ENCODE measurements at regions of chr7 and their contacts with region 1.

Region 1: GRCh38 chr7:55572378-55573233 is at the start of gene VOPP1:
- DNase-seq: peak; percentile 53
- H3K4me3 Mint-ChIP-seq: peak within 1 kb of the TSS; percentile 91
- H3K27ac Mint-ChIP-seq: peak within 1 kb of the TSS; percentile 97
- H3K4me1 Mint-ChIP-seq: peaks cover 63% of the 10 kb centered on the region
- H3K27me3 Mint-ChIP-seq: no peaks in the 10 kb centered on the region
- total RNA-seq, gene VOPP1: 100 to 102 TPM

Region 2: DNA sequence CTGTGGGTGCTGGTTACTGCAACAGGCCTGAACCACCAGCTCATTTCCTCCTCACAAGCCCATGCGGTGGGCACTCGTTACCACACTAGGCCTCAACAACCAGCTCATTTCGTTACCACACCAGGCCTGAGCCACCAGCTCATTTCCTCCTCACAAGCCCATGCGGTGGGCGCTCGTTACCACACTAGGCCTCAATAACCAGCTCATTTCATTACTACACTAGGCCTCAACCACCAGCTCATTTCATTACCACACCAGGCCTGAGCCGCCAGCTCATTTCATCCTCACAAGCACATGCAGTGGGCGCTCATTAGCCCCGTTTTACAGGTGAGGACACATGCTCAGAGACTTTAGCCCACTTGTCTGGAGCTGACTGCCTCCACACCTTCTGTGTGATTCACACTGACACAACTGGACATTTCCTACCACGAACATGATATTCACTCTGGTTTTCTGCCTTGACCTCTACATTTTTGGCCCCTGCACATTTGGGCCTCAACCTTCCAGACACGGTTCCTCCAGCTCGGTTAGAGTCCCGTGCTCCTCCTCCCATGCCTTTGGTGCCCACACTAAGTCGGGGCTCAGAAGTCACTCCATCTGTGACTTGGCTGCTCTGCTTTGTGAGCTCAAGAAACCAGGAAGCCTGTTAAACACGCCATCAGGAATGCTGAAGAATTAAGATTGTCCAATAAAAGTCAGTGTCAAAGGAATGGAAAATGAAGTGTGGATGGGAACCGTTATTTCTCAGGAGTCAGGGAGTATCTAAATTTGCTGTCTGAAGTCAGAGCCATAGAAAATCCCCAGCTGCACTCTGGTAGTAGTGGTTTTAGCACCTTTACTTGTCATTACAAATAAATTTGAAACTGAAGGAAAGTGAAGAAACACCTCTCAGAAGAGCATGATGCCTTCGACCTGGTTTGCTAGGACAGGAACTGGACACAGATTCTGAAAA is 263.3 kb before region 1 on chr7:
- CTCF ChIA-PET with region 1: no interaction called
- intact Hi-C with region 1: loop called (anchors 1 kb)
- DNase-seq: peak; percentile 70
- H3K4me3 Mint-ChIP-seq: no peak overlapping the region
- H3K27ac Mint-ChIP-seq: no peak overlapping the region
- H3K4me1 Mint-ChIP-seq: peaks cover 10% of the 10 kb centered on the region
- H3K27me3 Mint-ChIP-seq: no peaks in the 10 kb centered on the region

Region 3: GRCh38 chr7:55400191-55400590 is 172.4 kb before region 1 on chr7:
- CTCF ChIA-PET with region 1: no interaction called
- intact Hi-C with region 1: no loop called
- DNase-seq: no peak
- H3K4me3 Mint-ChIP-seq: no peak overlapping the region
- H3K27ac Mint-ChIP-seq: no peak overlapping the region
- H3K4me1 Mint-ChIP-seq: no peaks in the 10 kb centered on the region
- H3K27me3 Mint-ChIP-seq: no peaks in the 10 kb centered on the region

Region 4: DNA sequence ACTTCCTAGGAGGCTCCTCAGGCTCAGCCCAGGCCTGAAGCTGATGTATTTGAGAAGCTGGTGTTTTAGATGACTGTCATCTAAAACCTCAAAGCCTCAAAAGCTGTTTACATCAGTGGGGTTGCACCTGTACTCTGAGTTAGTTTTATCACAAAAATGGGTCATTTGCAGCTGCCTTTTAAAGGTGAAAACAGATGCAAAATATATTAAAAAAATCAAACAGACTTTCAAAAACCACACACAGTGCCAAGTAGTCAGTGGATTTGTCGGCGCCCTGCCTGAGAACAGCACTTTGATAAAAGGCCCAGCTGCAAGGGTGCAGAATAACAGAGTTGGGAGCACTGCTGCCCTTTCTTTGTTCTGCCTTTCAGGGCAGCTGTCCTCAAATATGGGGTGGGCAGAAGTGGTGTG is 103.3 kb before region 1 on chr7:
- CTCF ChIA-PET with region 1: no interaction called
- intact Hi-C with region 1: loop called (anchors 2 kb)
- DNase-seq: peak; percentile 53
- H3K4me3 Mint-ChIP-seq: no peak overlapping the region
- H3K27ac Mint-ChIP-seq: peak overlapping the region; percentile 83
- H3K4me1 Mint-ChIP-seq: peaks cover 72% of the 10 kb centered on the region
- H3K27me3 Mint-ChIP-seq: no peaks in the 10 kb centered on the region

Region 5: DNA sequence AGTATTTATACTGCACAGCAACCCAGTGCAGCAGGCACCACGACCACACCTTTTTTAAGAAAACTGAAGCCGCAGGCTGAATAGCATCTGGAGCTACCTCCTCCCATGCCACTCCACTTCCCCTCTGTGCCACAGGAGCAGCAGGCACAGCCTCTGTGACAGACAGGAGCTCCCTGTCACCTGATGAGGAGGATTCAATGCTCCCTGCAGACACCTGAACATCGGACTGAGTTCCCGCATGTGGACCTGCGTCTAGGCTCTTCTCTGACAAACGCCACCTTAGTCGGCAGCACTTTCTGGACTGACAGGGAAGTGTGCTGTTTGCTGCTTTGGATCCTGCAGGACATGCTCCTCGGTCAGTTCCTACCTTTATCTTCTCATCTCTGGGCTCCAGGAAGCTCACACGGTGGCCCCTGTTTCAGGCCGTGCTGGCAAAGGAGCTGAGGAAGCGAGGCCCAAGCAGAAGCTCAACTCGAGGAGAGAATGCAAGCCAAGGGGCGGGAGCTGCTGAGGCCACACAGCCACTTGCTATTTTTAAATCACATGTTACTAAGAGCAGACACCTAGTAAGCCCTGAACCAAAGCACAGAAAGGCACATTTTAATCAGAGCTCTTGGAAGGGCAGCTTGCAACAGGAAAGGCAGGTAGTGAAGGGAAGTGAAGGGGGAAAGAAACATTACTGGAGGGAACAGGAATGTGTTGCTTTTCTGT is 56.9 kb before region 1 on chr7:
- CTCF ChIA-PET with region 1: interaction called, 4 read pairs
- intact Hi-C with region 1: loop called (anchors 1 kb)
- DNase-seq: peak; percentile 56
- H3K4me3 Mint-ChIP-seq: peak overlapping the region; percentile 36
- H3K27ac Mint-ChIP-seq: peak overlapping the region; percentile 90
- H3K4me1 Mint-ChIP-seq: peaks cover 77% of the 10 kb centered on the region
- H3K27me3 Mint-ChIP-seq: no peaks in the 10 kb centered on the region

Region 6: GRCh38 chr7:55593515-55594318 is 21.1 kb after region 1 on chr7:
- CTCF ChIA-PET with region 1: interaction called, 6 read pairs
- intact Hi-C with region 1: loop called (anchors 1 kb)
- DNase-seq: peak; percentile 87
- H3K4me3 Mint-ChIP-seq: no peak overlapping the region
- H3K27ac Mint-ChIP-seq: no peak overlapping the region
- H3K4me1 Mint-ChIP-seq: peaks cover 17% of the 10 kb centered on the region
- H3K27me3 Mint-ChIP-seq: peaks cover 2% of the 10 kb centered on the region

Region 7: DNA sequence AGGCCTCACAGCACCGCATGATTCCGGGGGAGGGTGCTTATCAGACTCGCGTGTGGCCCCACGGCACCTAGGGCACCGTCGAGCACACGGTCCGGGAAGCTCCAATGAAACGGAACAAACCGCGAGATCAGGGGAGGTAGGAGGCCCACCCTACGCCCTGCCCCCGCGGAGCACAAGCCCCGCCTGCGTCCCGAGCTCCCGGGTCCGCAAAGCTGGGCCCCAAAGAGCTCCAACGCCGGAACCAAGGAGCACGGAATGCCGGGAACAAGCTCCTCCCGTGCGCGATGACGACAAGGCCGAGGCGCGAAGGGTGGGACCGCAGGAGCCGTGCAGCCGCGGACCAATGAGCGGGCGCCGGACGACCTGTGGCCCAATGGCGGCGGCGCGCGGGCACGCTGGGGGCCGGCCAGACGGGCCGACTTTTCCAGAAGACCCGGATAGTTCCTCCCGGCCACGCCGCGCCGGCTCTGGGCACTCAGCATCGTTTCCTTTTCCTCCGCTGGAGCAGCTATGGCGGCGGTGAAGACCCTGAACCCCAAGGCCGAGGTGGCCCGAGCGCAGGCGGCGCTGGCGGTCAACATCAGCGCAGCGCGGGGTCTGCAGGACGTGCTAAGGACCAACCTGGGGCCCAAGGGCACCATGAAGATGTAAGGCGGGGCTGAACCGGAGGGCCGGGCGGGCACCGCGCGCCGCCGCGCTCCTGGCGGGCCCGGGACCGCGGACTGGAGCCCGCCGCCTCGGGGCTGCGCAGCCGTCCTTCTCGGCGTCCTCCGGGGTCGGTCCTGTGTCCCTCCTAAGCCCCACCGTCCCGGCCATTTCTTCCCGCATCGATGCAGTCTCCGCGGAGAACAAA is 479.0 kb after region 1 on chr7 and contains the starts of genes CCT6A and PSPH:
- CTCF ChIA-PET with region 1: no interaction called
- intact Hi-C with region 1: loop called (anchors 1 kb)
- DNase-seq: peak; percentile 94
- H3K4me3 Mint-ChIP-seq: peak within 1 kb of the TSS; percentile 95
- H3K27ac Mint-ChIP-seq: peak within 1 kb of the TSS; percentile 95
- H3K4me1 Mint-ChIP-seq: peaks cover 48% of the 10 kb centered on the region
- H3K27me3 Mint-ChIP-seq: no peaks in the 10 kb centered on the region
- total RNA-seq, gene CCT6A: 225 to 231 TPM
- total RNA-seq, gene PSPH: 15.7 to 18.6 TPM